ENCODE measurements at regions of chr20 and their contacts with region 1.

Region 1: DNA sequence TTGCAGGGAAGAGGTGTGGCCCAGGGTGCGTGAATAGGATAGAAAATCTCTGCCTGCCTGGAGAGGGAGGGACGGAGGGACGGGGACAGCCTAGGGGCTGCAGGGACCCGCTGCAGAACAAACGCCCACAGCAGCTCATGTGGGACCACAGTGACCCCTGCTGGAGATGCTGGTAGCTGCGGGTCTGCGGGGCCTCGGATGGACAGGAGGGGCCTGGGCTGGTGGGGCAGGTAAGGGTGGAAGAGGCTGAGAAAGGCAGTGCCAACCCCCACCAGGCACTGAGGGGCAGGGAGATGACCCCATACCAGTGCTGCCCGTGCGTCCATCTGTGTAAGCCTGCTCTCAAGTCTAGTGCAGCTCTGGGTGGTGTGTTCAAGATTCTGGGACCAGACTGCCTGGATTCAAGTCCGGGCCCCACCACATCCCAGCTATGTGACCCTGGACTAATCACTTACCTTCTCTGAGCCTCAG is 39.4 kb downstream of the KIAA1755 start:
- DNase-seq: no peak
- ATAC-seq: peak; percentile 92
- H3K4me3 ChIP-seq: no peak overlapping the region
- H3K27ac ChIP-seq: no peak overlapping the region
- H3K4me1 ChIP-seq: no peaks in the 10 kb centered on the region
- H3K27me3 ChIP-seq: no peaks in the 10 kb centered on the region; a peak in 1 of 4 replicates
- CTCF ChIP-seq: peak; percentile 85 to 95 (median 88)
- EP300 ChIP-seq: no peak
- POLR2A ChIP-seq: no peak
- RAD21 ChIP-seq: peak; percentile 88

Region 2: GRCh38 chr20:37901654-37902503 is 319.3 kb before region 1 on chr20:
- CTCF ChIA-PET with region 1: interaction called, 7 read pairs
- POLR2A ChIA-PET with region 1: no interaction called
- RAD21 ChIA-PET with region 1: interaction called, 4 read pairs
- SMC1A ChIA-PET with region 1: interaction called, 7 read pairs
- in situ Hi-C with region 1: no loop called
- intact Hi-C with region 1: loop called (anchors 1 kb)
- DNase-seq: no peak
- ATAC-seq: peak; percentile 94
- H3K4me3 ChIP-seq: peak overlapping the region; percentile 61; the same call in 1 of the 2 replicates
- H3K27ac ChIP-seq: no peak overlapping the region
- H3K4me1 ChIP-seq: no peaks in the 10 kb centered on the region; the same call in 1 of the 2 replicates
- H3K27me3 ChIP-seq: peaks cover 1 to 4% of the 10 kb centered on the region in 2 experiments; a peak in 1 of 4 replicates
- CTCF ChIP-seq: peak; percentile 69 to 75 (median 72)
- EP300 ChIP-seq: no peak
- POLR2A ChIP-seq: no peak
- RAD21 ChIP-seq: peak; percentile 76

Region 3: DNA sequence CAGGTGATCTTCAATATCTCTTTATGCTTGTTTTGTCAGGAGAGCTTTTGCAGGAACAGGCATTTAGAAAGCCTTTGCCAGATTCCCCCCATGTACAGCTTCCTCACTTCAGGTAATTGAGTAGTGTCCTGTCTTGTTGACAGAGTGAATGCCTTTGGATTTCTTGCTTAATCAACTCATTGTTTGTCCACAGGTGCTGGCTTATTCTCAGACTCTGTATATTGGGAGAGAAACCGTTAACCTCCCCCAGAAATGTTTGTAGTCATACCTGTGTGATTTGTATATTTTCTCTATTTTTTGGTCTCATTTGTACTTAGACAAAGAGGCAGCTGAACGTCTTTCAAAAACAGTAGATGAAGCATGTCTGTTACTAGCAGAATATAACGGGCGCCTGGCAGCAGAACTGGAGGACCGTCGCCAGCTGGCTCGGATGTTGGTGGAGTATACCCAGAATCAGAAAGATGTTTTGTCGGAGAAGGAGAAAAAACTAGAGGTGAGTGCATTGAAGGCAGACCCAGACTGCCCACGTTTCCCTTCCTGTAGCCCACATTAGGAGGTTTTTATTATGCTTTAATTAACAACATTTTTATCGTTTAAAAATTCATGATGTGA is 155.3 kb before region 1 on chr20:
- CTCF ChIA-PET with region 1: interaction called, 404 read pairs
- POLR2A ChIA-PET with region 1: no interaction called
- RAD21 ChIA-PET with region 1: interaction called, 21 read pairs
- SMC1A ChIA-PET with region 1: interaction called, 128 read pairs
- in situ Hi-C with region 1: no loop called
- intact Hi-C with region 1: no loop called
- DNase-seq: no peak
- ATAC-seq: no peak
- H3K4me3 ChIP-seq: no peak overlapping the region
- H3K27ac ChIP-seq: no peak overlapping the region; the same call in 1 of the 2 replicates
- H3K4me1 ChIP-seq: peaks cover 16% of the 10 kb centered on the region; the same call in 1 of the 2 replicates
- H3K27me3 ChIP-seq: no peaks in the 10 kb centered on the region
- CTCF ChIP-seq: no peak
- EP300 ChIP-seq: no peak
- POLR2A ChIP-seq: no peak
- RAD21 ChIP-seq: no peak

Region 4: GRCh38 chr20:38165089-38165989 is 55.8 kb before region 1 on chr20 and contains the start of gene TGM2:
- CTCF ChIA-PET with region 1: interaction called, 17 read pairs
- POLR2A ChIA-PET with region 1: no interaction called
- RAD21 ChIA-PET with region 1: interaction called, 4 read pairs
- SMC1A ChIA-PET with region 1: interaction called, 22 read pairs
- in situ Hi-C with region 1: no loop called
- intact Hi-C with region 1: loop called (anchors 5 kb)
- DNase-seq: peak; percentile 32
- ATAC-seq: peak; percentile 97
- H3K4me3 ChIP-seq: peak within 1 kb of the TSS; percentile 25; the same call in 1 of the 2 replicates
- H3K27ac ChIP-seq: no peak within 1 kb of the TSS
- H3K4me1 ChIP-seq: peaks cover 17% of the 10 kb centered on the region
- H3K27me3 ChIP-seq: no peaks in the 10 kb centered on the region
- CTCF ChIP-seq: peak; percentile 80 to 88 (median 85)
- EP300 ChIP-seq: no peak
- POLR2A ChIP-seq: no peak
- RAD21 ChIP-seq: peak; percentile 87
- polyA plus RNA-seq, gene TGM2: 0.11 to 0.16 TPM

Region 5: GRCh38 chr20:38196592-38196991 is 24.6 kb before region 1 on chr20:
- CTCF ChIA-PET with region 1: interaction called, 18 read pairs
- POLR2A ChIA-PET with region 1: no interaction called
- RAD21 ChIA-PET with region 1: interaction called, 6 read pairs
- SMC1A ChIA-PET with region 1: interaction called, 11 read pairs
- in situ Hi-C with region 1: no loop called
- intact Hi-C with region 1: no loop called
- DNase-seq: no peak
- ATAC-seq: peak; percentile 49
- H3K4me3 ChIP-seq: no peak overlapping the region
- H3K27ac ChIP-seq: no peak overlapping the region
- H3K4me1 ChIP-seq: no peaks in the 10 kb centered on the region; the same call in 1 of the 2 replicates
- H3K27me3 ChIP-seq: no peaks in the 10 kb centered on the region; a peak in 2 of 4 replicates
- CTCF ChIP-seq: no peak
- EP300 ChIP-seq: no peak
- POLR2A ChIP-seq: no peak
- RAD21 ChIP-seq: no peak

Region 6: GRCh38 chr20:38338849-38339520 is 117.8 kb after region 1 on chr20:
- CTCF ChIA-PET with region 1: no interaction called
- POLR2A ChIA-PET with region 1: no interaction called
- RAD21 ChIA-PET with region 1: no interaction called
- SMC1A ChIA-PET with region 1: no interaction called
- in situ Hi-C with region 1: no loop called
- intact Hi-C with region 1: no loop called
- DNase-seq: no peak
- ATAC-seq: no peak
- H3K4me3 ChIP-seq: no peak overlapping the region
- H3K27ac ChIP-seq: no peak overlapping the region
- H3K4me1 ChIP-seq: no peaks in the 10 kb centered on the region
- H3K27me3 ChIP-seq: no peaks in the 10 kb centered on the region
- CTCF ChIP-seq: no peak
- EP300 ChIP-seq: no peak
- POLR2A ChIP-seq: no peak
- RAD21 ChIP-seq: no peak

Region 7: DNA sequence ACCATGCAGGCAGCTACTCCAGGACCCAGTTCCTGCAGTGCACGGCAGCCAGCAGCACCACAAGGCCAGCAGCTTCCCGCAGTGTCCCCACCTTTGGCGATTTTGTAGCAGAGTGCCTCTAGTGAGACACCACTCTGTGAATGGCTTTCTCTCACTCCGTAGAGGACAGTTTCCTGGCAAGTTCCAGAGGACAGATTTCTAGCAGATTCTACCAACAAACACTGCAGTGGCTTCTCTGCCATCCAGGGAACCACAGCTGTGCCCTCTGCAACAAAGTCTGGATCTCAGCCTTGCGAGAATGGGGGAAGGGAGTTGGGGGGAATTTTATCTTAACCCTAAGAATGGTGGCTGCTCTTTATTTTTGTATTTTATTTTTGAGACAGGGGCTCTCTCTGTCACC is 185.3 kb after region 1 on chr20:
- CTCF ChIA-PET with region 1: interaction called, 10 read pairs
- POLR2A ChIA-PET with region 1: no interaction called
- RAD21 ChIA-PET with region 1: interaction called, 6 read pairs
- SMC1A ChIA-PET with region 1: interaction called, 5 read pairs
- in situ Hi-C with region 1: no loop called
- intact Hi-C with region 1: no loop called
- DNase-seq: no peak
- ATAC-seq: no peak
- H3K4me3 ChIP-seq: no peak overlapping the region
- H3K27ac ChIP-seq: no peak overlapping the region
- H3K4me1 ChIP-seq: no peaks in the 10 kb centered on the region
- H3K27me3 ChIP-seq: no peaks in the 10 kb centered on the region
- CTCF ChIP-seq: no peak
- EP300 ChIP-seq: no peak
- POLR2A ChIP-seq: no peak
- RAD21 ChIP-seq: no peak

Measured in GM12878 (cell line).